AG04450 (cell line): ENCODE measurements at regions of chr6 and their contacts with region 1.

Region 1: DNA sequence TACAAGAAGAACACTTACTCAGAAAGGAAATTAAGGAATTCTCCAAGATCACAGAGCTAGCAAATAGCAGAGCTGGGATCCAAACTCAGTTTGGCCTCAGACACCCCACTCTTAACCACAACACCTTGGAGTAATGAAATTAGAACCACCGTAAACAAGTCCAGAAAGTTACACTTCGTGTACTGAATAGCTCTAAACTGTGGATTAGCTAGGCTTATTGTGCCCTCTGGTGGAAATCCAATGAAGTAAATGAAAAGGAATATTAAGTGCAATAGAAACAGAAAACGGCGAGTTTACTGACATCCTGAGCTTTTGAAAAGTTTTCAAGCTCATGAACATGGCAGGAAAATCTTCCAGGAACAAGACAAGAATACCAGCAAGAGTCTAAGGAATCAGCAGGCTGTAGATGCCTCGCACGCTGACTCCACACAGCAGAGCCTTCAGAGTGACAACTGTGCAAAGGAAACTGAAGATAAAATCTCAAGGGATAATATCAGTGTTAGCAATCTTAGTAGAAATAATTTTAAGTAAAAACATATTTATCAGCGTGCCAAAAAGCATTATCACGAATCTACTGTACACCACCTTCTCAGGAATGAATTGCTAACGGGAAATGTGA is 34.6 kb downstream of the FBXO5 start:
- DNase-seq: peak; percentile 3
- H3K4me3 ChIP-seq: no peak overlapping the region; the same call in 1 of the 2 replicates
- H3K27ac ChIP-seq: no peak overlapping the region
- H3K27me3 ChIP-seq: no peaks in the 10 kb centered on the region
- CTCF ChIP-seq: peak; percentile 72

Region 2: GRCh38 chr6:152484806-152485205 is 463.5 kb before region 1 on chr6:
- CTCF ChIA-PET with region 1: interaction called, 23 read pairs
- POLR2A ChIA-PET with region 1: no interaction called
- DNase-seq: no peak
- H3K4me3 ChIP-seq: no peak overlapping the region
- H3K27ac ChIP-seq: no peak overlapping the region
- H3K27me3 ChIP-seq: no peaks in the 10 kb centered on the region
- CTCF ChIP-seq: no peak

Region 3: DNA sequence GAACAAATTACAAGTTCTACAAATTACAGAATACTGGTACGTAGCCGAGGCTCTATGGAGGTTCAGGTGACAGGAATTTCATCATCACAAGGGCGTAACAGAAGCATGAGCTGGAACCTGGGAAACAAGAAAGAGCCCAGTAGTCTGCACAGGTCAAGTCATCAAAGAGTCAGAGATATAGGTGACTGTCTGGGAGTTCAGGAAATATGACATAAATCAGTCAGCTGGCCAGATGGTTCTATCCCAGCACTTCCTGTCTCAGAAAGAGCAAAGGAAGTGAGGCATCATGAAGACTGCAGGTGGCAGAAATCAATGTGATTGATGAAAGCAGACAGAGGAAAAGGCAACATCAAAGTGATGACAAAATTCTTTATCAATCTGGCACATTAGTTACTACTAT is 227.3 kb before region 1 on chr6:
- CTCF ChIA-PET with region 1: interaction called, 12 read pairs
- POLR2A ChIA-PET with region 1: no interaction called
- DNase-seq: no peak
- H3K4me3 ChIP-seq: no peak overlapping the region
- H3K27ac ChIP-seq: no peak overlapping the region
- H3K27me3 ChIP-seq: no peaks in the 10 kb centered on the region
- CTCF ChIP-seq: no peak

Region 4: DNA sequence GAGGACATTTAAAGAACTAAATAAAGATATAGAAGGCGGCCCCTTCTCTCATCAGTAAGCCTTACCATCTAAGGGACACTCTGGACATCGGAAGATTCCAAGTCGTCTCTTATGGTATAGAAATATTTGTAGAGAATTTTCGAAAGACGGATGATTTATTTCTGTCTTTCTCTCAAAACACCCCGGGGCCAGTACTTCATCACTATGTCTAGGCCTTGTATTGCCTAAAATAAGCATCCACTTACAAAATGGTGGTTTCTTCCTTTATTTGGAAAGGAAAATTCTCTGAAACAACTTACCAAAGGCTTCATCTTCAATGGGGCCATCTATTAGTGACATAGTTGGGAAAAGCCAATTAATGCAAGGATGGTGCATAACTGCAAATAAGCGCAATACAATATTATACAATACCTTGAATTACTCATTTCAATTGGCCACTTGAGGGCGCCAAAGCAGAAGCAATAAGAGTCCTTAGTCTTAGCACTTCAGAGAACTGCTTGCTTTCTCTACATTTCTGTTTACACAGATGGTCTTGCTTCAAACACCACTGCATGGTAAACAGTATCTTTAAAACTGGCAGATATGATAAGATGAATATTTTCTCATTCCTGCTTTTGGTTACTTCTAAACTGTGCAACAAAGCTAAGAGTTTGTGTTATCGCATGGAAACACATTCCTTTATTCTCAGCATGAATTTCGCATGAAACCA is 84.5 kb before region 1 on chr6:
- CTCF ChIA-PET with region 1: interaction called, 131 read pairs
- POLR2A ChIA-PET with region 1: no interaction called
- DNase-seq: peak; percentile 53
- H3K4me3 ChIP-seq: no peak overlapping the region
- H3K27ac ChIP-seq: no peak overlapping the region
- H3K27me3 ChIP-seq: no peaks in the 10 kb centered on the region
- CTCF ChIP-seq: peak; percentile 73

Region 5: GRCh38 chr6:152897799-152898399 is 50.4 kb before region 1 on chr6:
- CTCF ChIA-PET with region 1: interaction called, 18 read pairs
- POLR2A ChIA-PET with region 1: no interaction called
- DNase-seq: peak; percentile 18
- H3K4me3 ChIP-seq: no peak overlapping the region
- H3K27ac ChIP-seq: no peak overlapping the region
- H3K27me3 ChIP-seq: no peaks in the 10 kb centered on the region
- CTCF ChIP-seq: peak; percentile 93

Region 6: DNA sequence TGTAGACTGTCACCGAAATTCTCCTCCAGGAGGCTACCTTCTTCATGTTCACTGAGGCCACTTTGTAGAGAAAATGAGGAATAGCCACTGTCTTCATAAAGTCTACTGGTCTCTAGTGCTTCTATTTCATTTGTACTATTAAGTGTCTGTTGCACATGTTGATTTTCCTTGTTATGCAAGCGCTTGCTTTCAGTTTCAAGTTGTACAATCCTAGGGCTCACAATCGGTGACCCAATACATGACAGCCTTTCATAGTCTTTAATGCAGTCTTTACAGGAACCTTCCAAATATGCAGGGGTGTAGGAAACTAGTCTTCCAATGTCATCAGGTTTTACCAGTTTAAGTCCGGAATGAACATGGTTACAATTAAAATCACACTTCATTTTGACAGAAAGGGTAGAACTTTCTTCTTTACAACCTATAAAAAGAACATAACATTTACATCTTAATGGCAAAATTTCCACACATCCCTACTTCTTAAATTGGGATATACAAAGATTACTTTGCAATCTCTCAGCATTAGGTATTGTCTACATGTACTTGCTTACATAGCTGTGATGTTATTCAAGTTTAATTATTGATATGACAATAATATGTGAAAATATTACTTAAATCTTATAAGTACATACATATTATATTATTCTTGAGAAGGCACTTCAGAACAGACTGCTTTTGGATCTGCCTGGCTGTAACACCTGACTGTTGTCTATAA is 27.1 kb after region 1 on chr6:
- CTCF ChIA-PET with region 1: interaction called, 30 read pairs
- POLR2A ChIA-PET with region 1: no interaction called
- DNase-seq: no peak
- H3K4me3 ChIP-seq: no peak overlapping the region
- H3K27ac ChIP-seq: no peak overlapping the region
- H3K27me3 ChIP-seq: no peaks in the 10 kb centered on the region
- CTCF ChIP-seq: no peak

Region 7: GRCh38 chr6:153170511-153170910 is 222.3 kb after region 1 on chr6:
- CTCF ChIA-PET with region 1: no interaction called
- POLR2A ChIA-PET with region 1: no interaction called
- DNase-seq: no peak
- H3K4me3 ChIP-seq: no peak overlapping the region
- H3K27ac ChIP-seq: no peak overlapping the region
- H3K27me3 ChIP-seq: no peaks in the 10 kb centered on the region
- CTCF ChIP-seq: no peak